ENCODE measurements at regions of chr5 and their contacts with region 1.

Region 1: DNA sequence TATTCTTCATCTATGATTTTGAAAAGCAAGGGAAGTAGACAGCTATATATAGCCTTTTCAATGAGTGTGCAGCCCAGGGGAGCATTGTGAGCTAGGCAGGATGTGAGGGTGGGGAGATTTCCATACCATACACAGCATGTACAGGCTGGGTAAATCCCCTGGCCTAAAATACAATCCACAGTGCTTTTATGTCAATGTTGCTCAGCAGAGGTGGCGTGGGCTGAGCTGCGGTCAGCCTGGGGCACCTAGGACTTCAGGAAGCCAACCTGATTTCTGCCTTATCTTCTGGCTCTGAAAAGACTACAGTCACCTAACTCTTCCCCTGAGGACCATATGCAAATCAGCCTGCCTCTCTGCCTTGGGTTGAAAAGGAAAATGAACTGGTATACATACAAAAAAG is 6.3 kb upstream of the GARIN3 start:
- DNase-seq: peak; percentile 84
- H3K4me3 Mint-ChIP-seq: peak overlapping the region; percentile 68
- H3K27ac Mint-ChIP-seq: peak overlapping the region; percentile 91
- H3K4me1 Mint-ChIP-seq: peaks cover 78% of the 10 kb centered on the region
- H3K27me3 Mint-ChIP-seq: no peaks in the 10 kb centered on the region

Region 2: DNA sequence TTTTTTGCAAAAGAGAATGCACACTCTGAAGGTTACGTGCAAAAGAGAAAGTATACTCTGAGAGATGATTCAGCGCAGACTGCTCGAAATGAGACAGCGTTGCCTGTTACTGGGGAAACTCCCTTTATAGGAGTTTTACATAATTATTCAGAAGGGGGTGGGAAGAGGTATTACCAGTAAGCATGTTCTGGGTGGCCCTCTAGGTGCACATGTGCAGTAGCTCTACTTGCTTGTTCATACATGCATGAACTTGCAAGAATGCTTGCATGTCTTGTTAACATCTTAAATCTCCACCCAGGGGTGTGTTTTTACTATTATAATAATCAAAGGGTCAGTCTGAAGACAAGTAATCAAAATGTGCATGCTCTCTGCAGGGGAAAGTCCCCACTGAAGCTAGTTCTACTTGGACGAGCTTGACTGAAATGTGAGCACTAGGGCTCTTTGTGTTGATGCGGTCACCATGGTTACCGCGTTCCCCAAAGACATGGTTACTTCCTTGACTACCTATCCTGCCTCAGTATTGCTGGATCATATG is 769.9 kb before region 1 on chr5:
- intact Hi-C with region 1: loop called (anchors 1 kb)
- DNase-seq: peak; percentile 59
- H3K4me3 Mint-ChIP-seq: peak overlapping the region; percentile 53
- H3K27ac Mint-ChIP-seq: peak overlapping the region; percentile 79
- H3K4me1 Mint-ChIP-seq: peaks cover 18% of the 10 kb centered on the region
- H3K27me3 Mint-ChIP-seq: peaks cover 7% of the 10 kb centered on the region

Region 3: DNA sequence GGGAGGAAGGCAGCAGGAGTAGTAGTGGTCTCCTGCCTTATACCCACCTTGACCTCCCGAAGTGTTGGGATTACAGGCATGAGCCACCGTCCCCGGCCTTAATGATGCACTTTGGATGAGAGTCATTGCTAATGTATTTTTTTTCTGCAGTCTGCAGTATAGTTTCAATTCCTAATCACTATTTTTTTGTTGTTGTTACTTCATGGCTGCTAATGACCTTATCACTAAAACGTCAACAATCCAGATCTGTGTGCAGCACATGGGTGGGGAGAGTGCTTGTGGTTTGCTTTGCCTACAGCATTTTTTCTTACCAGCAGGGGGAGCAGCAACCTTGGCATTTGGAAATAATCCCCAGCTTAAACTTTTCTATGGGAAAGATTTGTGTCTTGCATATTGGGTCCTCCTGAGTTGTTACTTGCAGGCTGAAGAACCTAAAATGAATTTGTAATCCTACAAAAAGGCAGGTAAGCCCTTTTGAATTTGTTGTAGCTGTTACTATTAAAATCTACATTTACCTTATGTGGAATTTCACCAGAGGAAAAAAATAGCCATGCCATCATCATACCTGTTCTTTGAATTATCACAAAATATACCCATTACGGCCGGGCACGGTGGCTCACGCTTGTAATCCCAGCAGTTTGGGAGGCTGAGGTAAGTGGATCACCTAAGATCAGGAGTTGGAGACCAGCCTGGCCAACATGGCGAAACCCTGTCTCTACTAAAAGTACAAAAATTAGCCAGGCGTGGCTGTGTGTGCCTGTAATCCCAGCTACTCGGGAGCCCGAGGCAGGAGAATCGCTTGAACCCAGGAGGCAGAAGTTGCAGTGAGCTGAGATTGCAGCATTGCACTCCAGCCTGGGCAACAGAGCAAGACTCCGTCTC is 23.4 kb before region 1 on chr5:
- intact Hi-C with region 1: loop called (anchors 1 kb)
- DNase-seq: peak; percentile 74
- H3K4me3 Mint-ChIP-seq: no peak overlapping the region
- H3K27ac Mint-ChIP-seq: peak overlapping the region; percentile 67
- H3K4me1 Mint-ChIP-seq: peaks cover 43% of the 10 kb centered on the region
- H3K27me3 Mint-ChIP-seq: no peaks in the 10 kb centered on the region

Region 4: DNA sequence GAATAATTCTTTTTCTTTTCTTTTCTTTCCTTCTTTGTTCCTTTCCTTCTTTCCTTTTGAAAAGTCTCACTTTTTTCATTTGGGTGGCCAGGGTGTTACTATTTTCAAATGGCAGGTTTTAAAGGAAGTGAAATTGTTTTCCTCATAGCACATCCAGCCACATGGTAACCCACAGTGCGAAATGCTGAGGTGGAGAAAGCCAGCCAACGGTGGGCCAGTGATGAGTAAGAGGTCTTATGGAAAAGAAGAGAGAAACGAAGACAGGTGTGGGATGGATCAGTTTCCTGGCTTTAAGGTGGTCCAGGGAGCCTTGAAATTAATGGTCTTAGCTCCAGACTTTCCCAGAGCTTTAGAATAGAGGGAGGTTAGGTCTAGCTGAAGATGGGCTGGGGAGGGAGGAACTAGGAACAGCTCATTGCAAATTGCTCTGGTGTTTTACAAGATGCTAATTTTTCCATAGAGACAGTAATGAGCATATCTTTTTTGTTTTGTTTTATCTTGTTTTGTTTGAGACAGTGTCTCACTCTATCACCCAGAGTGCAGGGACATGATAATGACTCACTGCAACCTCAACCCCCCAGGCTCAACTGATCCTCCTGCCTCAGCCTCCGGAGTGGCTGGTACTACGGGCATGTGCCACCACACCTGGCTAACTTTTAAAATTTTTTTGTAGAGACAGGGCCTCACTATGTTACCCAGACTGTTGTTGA is 26.0 kb after region 1 on chr5:
- intact Hi-C with region 1: loop called (anchors 1 kb)
- DNase-seq: no peak
- H3K4me3 Mint-ChIP-seq: peak overlapping the region; percentile 68
- H3K27ac Mint-ChIP-seq: peak overlapping the region; percentile 94
- H3K4me1 Mint-ChIP-seq: peaks cover 94% of the 10 kb centered on the region
- H3K27me3 Mint-ChIP-seq: no peaks in the 10 kb centered on the region

Region 5: DNA sequence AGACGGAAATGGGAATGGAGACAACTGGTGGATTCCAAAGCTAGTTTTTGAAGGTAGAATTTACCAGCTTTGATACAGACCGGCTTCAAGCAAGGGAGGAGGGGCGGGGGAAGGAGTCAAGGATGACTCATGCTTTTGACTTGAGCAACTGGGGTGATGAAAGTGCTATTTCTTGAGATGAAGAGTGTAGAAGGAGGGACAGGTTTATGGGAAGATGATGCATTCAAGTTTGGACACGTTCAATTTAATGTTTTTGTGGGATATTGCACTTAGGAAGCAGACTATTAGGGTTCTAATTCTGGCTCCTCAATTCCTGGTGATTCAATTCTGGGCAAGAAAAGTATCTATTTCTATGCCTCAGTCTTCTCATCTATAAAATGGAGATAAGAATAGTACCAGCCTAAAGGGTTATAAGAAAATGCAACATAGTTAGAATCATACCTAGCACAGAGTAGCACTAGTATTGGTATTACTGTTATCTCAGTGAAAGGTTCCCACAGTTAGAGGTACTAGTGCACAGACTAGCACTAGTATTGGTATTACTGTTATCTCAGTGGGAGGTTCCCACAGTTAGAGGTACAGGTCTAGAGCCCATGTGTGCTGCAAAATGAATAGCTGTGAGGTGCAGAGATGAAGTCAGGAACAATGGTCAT is 292.2 kb after region 1 on chr5:
- intact Hi-C with region 1: loop called (anchors 10 kb)
- DNase-seq: peak; percentile 42
- H3K4me3 Mint-ChIP-seq: peak overlapping the region; percentile 36
- H3K27ac Mint-ChIP-seq: peak overlapping the region; percentile 83
- H3K4me1 Mint-ChIP-seq: peaks cover 48% of the 10 kb centered on the region
- H3K27me3 Mint-ChIP-seq: peaks cover 17% of the 10 kb centered on the region